ENCODE measurements at regions of chr2 and their contacts with region 1.

Region 1: GRCh38 chr2:234257856-234258561 is 207.5 kb downstream of the SPP2 start:
- DNase-seq: no peak
- H3K4me3 ChIP-seq: no peak overlapping the region
- H3K27ac ChIP-seq: peak overlapping the region; percentile 11 to 69 (median 34)
- H3K4me1 ChIP-seq: peaks cover 9 to 43% (median 10%) of the 10 kb centered on the region in 3 donors
- H3K27me3 ChIP-seq: no peaks in the 10 kb centered on the region
- CTCF ChIP-seq: peak in 5 of 6 experiments; percentile 38 to 77 (median 54)
- POLR2A ChIP-seq: no peak

Region 2: GRCh38 chr2:233938676-233939370 is 319.2 kb before region 1 on chr2:
- intact Hi-C with region 1: no loop called
- DNase-seq: no peak
- H3K4me3 ChIP-seq: peak overlapping the region in 2 of 4 donors; percentile 3 to 23
- H3K27ac ChIP-seq: no peak overlapping the region
- H3K4me1 ChIP-seq: peaks cover 0 to 12% (median 0%) of the 10 kb centered on the region in 3 donors
- H3K27me3 ChIP-seq: peaks cover 0 to 64% (median 0%) of the 10 kb centered on the region in 4 donors
- CTCF ChIP-seq: no peak
- POLR2A ChIP-seq: no peak

Region 3: DNA sequence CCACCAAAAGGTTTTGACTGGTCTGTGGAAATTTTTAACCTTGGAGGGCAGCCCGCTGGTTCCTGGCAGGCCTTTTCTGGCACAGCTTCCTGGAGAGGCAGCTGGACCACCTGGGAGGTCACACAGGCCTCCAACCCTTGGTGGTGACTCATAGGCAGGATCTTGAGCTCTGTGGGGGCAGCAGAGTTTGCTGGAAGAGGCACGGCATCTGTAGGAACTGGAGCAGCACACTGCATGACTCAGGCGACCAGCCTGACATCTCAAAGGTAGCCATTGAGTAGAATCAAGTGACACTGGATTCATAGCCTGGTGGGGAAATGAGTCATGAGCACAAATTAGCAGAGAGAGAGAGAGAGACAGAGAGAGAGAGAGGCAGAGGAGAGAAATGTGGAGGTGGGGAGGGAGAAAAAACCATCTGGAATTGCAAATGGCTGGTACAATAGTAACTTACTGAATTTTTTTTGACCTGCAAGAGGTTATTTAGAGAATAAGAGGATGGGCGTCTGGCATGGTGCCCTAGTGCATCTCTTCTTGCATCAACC is 283.4 kb before region 1 on chr2:
- intact Hi-C with region 1: no loop called
- DNase-seq: no peak
- H3K4me3 ChIP-seq: no peak overlapping the region
- H3K27ac ChIP-seq: no peak overlapping the region
- H3K4me1 ChIP-seq: peaks cover 5 to 41% (median 6%) of the 10 kb centered on the region in 3 donors
- H3K27me3 ChIP-seq: peaks cover 0 to 77% (median 0%) of the 10 kb centered on the region in 4 donors
- CTCF ChIP-seq: no peak
- POLR2A ChIP-seq: no peak

Region 4: GRCh38 chr2:234135720-234136221 is 122.2 kb before region 1 on chr2:
- intact Hi-C with region 1: loop called (anchors 10 kb)
- DNase-seq: no peak
- H3K4me3 ChIP-seq: no peak overlapping the region
- H3K27ac ChIP-seq: peak overlapping the region in 2 of 4 donors; percentile 42
- H3K4me1 ChIP-seq: peaks cover 3 to 52% (median 11%) of the 10 kb centered on the region in 3 donors
- H3K27me3 ChIP-seq: peaks cover 0 to 22% (median 0%) of the 10 kb centered on the region in 4 donors
- CTCF ChIP-seq: peak; percentile 69 to 89 (median 74)
- POLR2A ChIP-seq: no peak

Region 5: GRCh38 chr2:234368861-234369261 is 110.9 kb after region 1 on chr2:
- intact Hi-C with region 1: loop called (anchors 5 kb)
- DNase-seq: no peak
- H3K4me3 ChIP-seq: no peak overlapping the region
- H3K27ac ChIP-seq: peak overlapping the region; percentile 80 to 93 (median 83)
- H3K4me1 ChIP-seq: peaks cover 22 to 91% (median 50%) of the 10 kb centered on the region in 3 donors
- H3K27me3 ChIP-seq: no peaks in the 10 kb centered on the region
- CTCF ChIP-seq: peak in 2 of 6 experiments; percentile 4 to 23
- POLR2A ChIP-seq: peak in 1 of 4 donors; percentile 19